ENCODE measurements at regions of chr3 and their contacts with region 1.

Region 1: GRCh38 chr3:105366326-105367062 is at the start of gene ALCAM:
- DNase-seq: peak; percentile 80 to 83
- H3K4me3 ChIP-seq: peak within 1 kb of the TSS; percentile 43
- H3K4me3 Mint-ChIP-seq: peak within 1 kb of the TSS; percentile 73
- H3K27ac Mint-ChIP-seq: no peak within 1 kb of the TSS
- H3K4me1 ChIP-seq: 0 out of 2 replicates have a peak, but pooled peaks cover 4% of the 10 kb centered on the region
- H3K4me1 Mint-ChIP-seq: peaks cover 21% of the 10 kb centered on the region
- H3K27me3 ChIP-seq: peaks cover 4% of the 10 kb centered on the region; the same call in 1 of the 2 replicates
- H3K27me3 Mint-ChIP-seq: peaks cover 24% of the 10 kb centered on the region
- CTCF ChIP-seq: peak in 1 of 2 experiments; percentile 39
- total RNA-seq, gene ALCAM: 0.41 and 0.46 TPM in 2 replicates

Region 2: GRCh38 chr3:104596551-104596950 is 769.9 kb before region 1 on chr3:
- CTCF ChIA-PET with region 1: no interaction called
- POLR2A ChIA-PET with region 1: no interaction called
- intact Hi-C with region 1: loop called (anchors 1 kb)
- DNase-seq: peak in 1 of 2 experiments; percentile 25
- H3K4me3 ChIP-seq: no peak overlapping the region
- H3K4me3 Mint-ChIP-seq: no peak overlapping the region
- H3K27ac Mint-ChIP-seq: no peak overlapping the region
- H3K4me1 ChIP-seq: no peaks in the 10 kb centered on the region
- H3K4me1 Mint-ChIP-seq: no peaks in the 10 kb centered on the region
- H3K27me3 ChIP-seq: no peaks in the 10 kb centered on the region
- H3K27me3 Mint-ChIP-seq: no peaks in the 10 kb centered on the region
- CTCF ChIP-seq: peak; percentile 36 to 51

Region 3: DNA sequence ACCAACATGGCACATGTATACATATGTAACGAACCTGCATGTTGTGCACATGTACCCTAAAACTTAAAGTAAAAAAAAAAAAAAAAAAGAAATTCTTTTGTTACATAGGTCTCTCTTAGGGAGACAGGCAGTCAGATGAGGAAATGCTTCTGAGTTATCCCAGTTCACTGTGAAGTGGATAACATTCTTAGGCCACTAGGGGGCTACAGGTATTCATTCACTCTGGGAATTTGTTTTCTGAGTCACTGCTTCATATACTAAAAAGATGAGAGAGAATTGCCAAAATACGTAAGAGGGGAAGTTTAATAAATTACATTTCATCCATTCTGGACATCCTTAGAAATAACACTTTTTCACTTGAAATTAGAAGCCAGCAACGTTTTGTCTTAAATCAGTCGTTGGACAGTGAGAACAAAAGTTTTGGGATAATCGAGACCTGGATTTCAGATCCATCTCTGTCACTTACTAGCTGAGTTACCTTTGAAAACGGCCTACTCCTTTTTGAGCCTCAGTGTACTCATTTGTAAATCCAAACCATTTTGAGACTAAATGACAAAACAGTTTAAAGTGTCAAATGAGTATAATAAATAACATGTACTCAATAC is 738.2 kb before region 1 on chr3:
- CTCF ChIA-PET with region 1: no interaction called
- POLR2A ChIA-PET with region 1: no interaction called
- intact Hi-C with region 1: loop called (anchors 10 kb)
- DNase-seq: peak in 1 of 2 experiments; percentile 21
- H3K4me3 ChIP-seq: no peak overlapping the region
- H3K4me3 Mint-ChIP-seq: no peak overlapping the region
- H3K27ac Mint-ChIP-seq: no peak overlapping the region
- H3K4me1 ChIP-seq: no peaks in the 10 kb centered on the region
- H3K4me1 Mint-ChIP-seq: no peaks in the 10 kb centered on the region
- H3K27me3 ChIP-seq: no peaks in the 10 kb centered on the region
- H3K27me3 Mint-ChIP-seq: no peaks in the 10 kb centered on the region
- CTCF ChIP-seq: peak; percentile 56 to 67

Region 4: GRCh38 chr3:105195260-105195659 is 171.2 kb before region 1 on chr3:
- CTCF ChIA-PET with region 1: no interaction called
- POLR2A ChIA-PET with region 1: no interaction called
- intact Hi-C with region 1: loop called (anchors 10 kb)
- DNase-seq: no peak
- H3K4me3 ChIP-seq: no peak overlapping the region
- H3K4me3 Mint-ChIP-seq: no peak overlapping the region
- H3K27ac Mint-ChIP-seq: no peak overlapping the region
- H3K4me1 ChIP-seq: no peaks in the 10 kb centered on the region
- H3K4me1 Mint-ChIP-seq: no peaks in the 10 kb centered on the region
- H3K27me3 ChIP-seq: no peaks in the 10 kb centered on the region
- H3K27me3 Mint-ChIP-seq: no peaks in the 10 kb centered on the region
- CTCF ChIP-seq: no peak

Region 5: DNA sequence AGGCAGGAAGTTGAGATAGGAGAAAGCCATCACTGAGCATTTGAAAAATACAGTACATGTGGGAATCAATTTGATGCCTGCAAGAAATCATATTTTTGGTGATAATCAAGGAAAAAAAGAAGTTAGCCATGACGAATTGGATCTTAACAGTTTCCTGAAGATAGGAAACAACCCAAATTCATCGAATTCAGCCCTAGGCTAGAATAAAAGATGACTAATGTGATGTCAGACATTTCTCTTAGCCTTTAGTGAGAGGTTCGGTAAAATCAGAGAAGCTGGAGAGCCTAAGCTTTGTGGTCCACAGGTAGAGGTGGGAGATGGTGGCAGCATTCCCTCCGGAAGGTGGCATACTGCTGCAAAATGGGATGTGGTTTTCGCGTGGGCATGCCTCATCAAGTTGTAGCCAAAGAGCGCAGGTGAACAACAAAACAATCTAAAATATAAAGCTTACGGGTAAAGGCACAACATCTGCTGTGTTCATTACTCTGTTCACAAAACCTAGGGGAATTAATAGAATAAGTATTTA is 143.9 kb before region 1 on chr3:
- CTCF ChIA-PET with region 1: no interaction called
- POLR2A ChIA-PET with region 1: no interaction called
- intact Hi-C with region 1: loop called (anchors 5 kb)
- DNase-seq: peak in 1 of 2 experiments; percentile 9
- H3K4me3 ChIP-seq: no peak overlapping the region
- H3K4me3 Mint-ChIP-seq: no peak overlapping the region
- H3K27ac Mint-ChIP-seq: no peak overlapping the region
- H3K4me1 ChIP-seq: no peaks in the 10 kb centered on the region
- H3K4me1 Mint-ChIP-seq: no peaks in the 10 kb centered on the region
- H3K27me3 ChIP-seq: no peaks in the 10 kb centered on the region
- H3K27me3 Mint-ChIP-seq: no peaks in the 10 kb centered on the region
- CTCF ChIP-seq: no peak

Region 6: GRCh38 chr3:105293441-105293840 is 73.1 kb before region 1 on chr3:
- CTCF ChIA-PET with region 1: no interaction called
- POLR2A ChIA-PET with region 1: no interaction called
- intact Hi-C with region 1: loop called (anchors 5 kb)
- DNase-seq: no peak
- H3K4me3 ChIP-seq: no peak overlapping the region
- H3K4me3 Mint-ChIP-seq: no peak overlapping the region
- H3K27ac Mint-ChIP-seq: no peak overlapping the region
- H3K4me1 ChIP-seq: no peaks in the 10 kb centered on the region
- H3K4me1 Mint-ChIP-seq: no peaks in the 10 kb centered on the region
- H3K27me3 ChIP-seq: no peaks in the 10 kb centered on the region
- H3K27me3 Mint-ChIP-seq: peaks cover 4% of the 10 kb centered on the region
- CTCF ChIP-seq: no peak

Region 7: DNA sequence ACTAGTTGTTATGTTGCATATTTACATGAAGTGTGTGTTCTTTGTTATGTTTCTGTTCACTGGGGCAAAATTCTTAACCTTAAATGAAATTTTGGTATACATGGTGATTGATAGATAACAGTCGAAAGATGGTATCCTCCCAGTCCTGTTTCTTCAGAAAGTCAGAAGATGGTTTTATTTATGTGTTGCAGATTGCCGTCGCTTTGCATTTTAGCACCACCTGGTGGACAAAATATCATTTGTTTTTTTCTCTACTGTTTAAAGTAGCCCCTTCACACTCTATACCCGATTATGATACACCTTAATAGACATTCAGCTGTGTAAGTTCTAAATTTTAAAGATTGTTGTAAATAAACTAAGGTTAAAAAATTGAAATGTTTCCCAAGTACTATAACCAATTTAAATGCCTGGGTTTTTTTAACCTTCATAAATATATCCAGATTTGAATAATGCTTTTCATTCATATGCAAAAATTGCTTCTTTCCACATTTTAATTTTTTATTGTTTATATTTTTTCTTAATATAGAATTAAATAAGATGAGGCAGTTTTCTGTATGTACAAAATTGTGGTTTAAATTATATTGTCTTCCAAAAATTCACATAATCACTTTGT is 152.4 kb after region 1 on chr3:
- CTCF ChIA-PET with region 1: no interaction called
- POLR2A ChIA-PET with region 1: no interaction called
- intact Hi-C with region 1: loop called (anchors 5 kb)
- DNase-seq: peak in 1 of 2 experiments; percentile 53
- H3K4me3 ChIP-seq: no peak overlapping the region
- H3K4me3 Mint-ChIP-seq: no peak overlapping the region
- H3K27ac Mint-ChIP-seq: no peak overlapping the region
- H3K4me1 ChIP-seq: no peaks in the 10 kb centered on the region
- H3K4me1 Mint-ChIP-seq: no peaks in the 10 kb centered on the region
- H3K27me3 ChIP-seq: no peaks in the 10 kb centered on the region
- H3K27me3 Mint-ChIP-seq: no peaks in the 10 kb centered on the region
- CTCF ChIP-seq: peak; percentile 53 to 67

Region 8: DNA sequence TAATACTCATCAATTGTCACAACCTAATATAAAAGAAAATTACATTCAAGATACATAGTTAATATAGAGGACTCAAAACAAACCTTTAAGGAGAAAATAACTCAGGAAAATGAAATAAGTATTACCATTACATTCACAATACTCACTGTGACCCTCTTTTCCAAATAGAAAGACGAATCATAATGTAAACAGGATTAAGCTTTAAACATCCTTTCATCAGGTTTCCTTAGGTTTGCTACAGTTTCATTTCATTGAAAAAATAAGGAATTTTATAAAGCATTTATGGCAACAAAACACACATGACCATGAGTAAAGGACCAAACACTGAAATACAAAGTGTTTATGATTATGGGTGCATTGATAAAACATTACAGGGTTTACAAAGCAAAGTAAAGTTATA is 163.0 kb after region 1 on chr3:
- CTCF ChIA-PET with region 1: no interaction called
- POLR2A ChIA-PET with region 1: no interaction called
- intact Hi-C with region 1: no loop called
- DNase-seq: no peak
- H3K4me3 ChIP-seq: no peak overlapping the region
- H3K4me3 Mint-ChIP-seq: no peak overlapping the region
- H3K27ac Mint-ChIP-seq: no peak overlapping the region
- H3K4me1 ChIP-seq: no peaks in the 10 kb centered on the region
- H3K4me1 Mint-ChIP-seq: no peaks in the 10 kb centered on the region
- H3K27me3 ChIP-seq: no peaks in the 10 kb centered on the region
- H3K27me3 Mint-ChIP-seq: peaks cover 3% of the 10 kb centered on the region
- CTCF ChIP-seq: no peak